GM12878 (cell line): ENCODE measurements at regions of chr1 and their contacts with region 1.

Region 1: GRCh38 chr1:170126696-170127095 is 19.1 kb upstream of the NTMT2 start:
- DNase-seq: peak; percentile 72
- ATAC-seq: peak; percentile 100
- H3K4me3 ChIP-seq: no peak overlapping the region
- H3K27ac ChIP-seq: 0 out of 2 replicates have a peak overlapping the region, but pooled peaks have one; percentile 18
- H3K4me1 ChIP-seq: peaks cover 3% of the 10 kb centered on the region; the same call in 1 of the 2 replicates
- H3K27me3 ChIP-seq: no peaks in the 10 kb centered on the region
- CTCF ChIP-seq: peak; percentile 19 to 32 (median 30); a peak in 3 of 6 replicates
- EP300 ChIP-seq: no peak; a peak in 1 of 4 replicates
- POLR2A ChIP-seq: no peak
- RAD21 ChIP-seq: peak; percentile 40

Region 2: DNA sequence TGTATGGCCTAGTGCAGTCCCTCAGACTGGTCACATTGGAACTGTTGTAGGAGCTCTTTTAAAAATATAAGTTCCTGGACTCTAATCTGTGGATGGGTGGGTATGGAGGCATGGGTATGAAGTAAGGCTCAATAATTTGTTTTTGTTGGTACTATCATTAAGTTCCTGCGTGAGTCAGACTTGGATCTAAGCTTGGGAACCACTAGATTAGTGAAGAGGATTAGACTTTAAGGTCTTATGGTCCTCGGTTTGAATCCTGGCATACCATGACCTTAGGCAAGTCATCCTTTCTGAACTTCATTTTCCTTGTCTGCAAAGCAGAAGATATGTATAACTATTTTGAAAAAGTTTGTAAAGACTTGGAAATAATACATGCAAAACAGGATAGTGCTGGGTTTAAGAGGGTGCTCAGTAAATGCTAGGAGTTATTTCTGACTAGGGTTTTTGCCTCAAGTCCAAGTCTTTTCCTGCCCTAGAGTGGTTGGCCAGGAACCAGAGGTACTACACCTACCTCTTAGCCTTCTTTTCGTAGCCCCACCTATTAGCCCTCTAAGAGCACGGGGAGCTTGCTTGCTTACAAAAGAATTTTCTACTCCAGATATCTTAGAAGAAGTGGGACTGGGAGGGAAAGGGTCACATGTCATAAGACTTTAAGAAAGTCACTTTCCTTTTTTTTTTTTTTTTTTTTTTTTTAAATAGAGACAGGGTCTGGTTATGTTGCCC is 293.4 kb before region 1 on chr1:
- CTCF ChIA-PET with region 1: no interaction called
- POLR2A ChIA-PET with region 1: no interaction called
- RAD21 ChIA-PET with region 1: no interaction called
- SMC1A ChIA-PET with region 1: no interaction called
- in situ Hi-C with region 1: no loop called
- intact Hi-C with region 1: no loop called
- DNase-seq: no peak
- ATAC-seq: no peak
- H3K4me3 ChIP-seq: no peak overlapping the region
- H3K27ac ChIP-seq: no peak overlapping the region
- H3K4me1 ChIP-seq: no peaks in the 10 kb centered on the region
- H3K27me3 ChIP-seq: no peaks in the 10 kb centered on the region
- CTCF ChIP-seq: no peak
- EP300 ChIP-seq: no peak
- POLR2A ChIP-seq: no peak
- RAD21 ChIP-seq: no peak

Region 3: GRCh38 chr1:169941982-169942830 is 184.5 kb before region 1 on chr1:
- CTCF ChIA-PET with region 1: no interaction called
- POLR2A ChIA-PET with region 1: no interaction called
- RAD21 ChIA-PET with region 1: no interaction called
- SMC1A ChIA-PET with region 1: no interaction called
- in situ Hi-C with region 1: no loop called
- intact Hi-C with region 1: no loop called
- DNase-seq: no peak
- ATAC-seq: no peak
- H3K4me3 ChIP-seq: no peak overlapping the region
- H3K27ac ChIP-seq: no peak overlapping the region
- H3K4me1 ChIP-seq: no peaks in the 10 kb centered on the region
- H3K27me3 ChIP-seq: no peaks in the 10 kb centered on the region
- CTCF ChIP-seq: no peak
- EP300 ChIP-seq: no peak
- POLR2A ChIP-seq: no peak
- RAD21 ChIP-seq: no peak

Region 4: DNA sequence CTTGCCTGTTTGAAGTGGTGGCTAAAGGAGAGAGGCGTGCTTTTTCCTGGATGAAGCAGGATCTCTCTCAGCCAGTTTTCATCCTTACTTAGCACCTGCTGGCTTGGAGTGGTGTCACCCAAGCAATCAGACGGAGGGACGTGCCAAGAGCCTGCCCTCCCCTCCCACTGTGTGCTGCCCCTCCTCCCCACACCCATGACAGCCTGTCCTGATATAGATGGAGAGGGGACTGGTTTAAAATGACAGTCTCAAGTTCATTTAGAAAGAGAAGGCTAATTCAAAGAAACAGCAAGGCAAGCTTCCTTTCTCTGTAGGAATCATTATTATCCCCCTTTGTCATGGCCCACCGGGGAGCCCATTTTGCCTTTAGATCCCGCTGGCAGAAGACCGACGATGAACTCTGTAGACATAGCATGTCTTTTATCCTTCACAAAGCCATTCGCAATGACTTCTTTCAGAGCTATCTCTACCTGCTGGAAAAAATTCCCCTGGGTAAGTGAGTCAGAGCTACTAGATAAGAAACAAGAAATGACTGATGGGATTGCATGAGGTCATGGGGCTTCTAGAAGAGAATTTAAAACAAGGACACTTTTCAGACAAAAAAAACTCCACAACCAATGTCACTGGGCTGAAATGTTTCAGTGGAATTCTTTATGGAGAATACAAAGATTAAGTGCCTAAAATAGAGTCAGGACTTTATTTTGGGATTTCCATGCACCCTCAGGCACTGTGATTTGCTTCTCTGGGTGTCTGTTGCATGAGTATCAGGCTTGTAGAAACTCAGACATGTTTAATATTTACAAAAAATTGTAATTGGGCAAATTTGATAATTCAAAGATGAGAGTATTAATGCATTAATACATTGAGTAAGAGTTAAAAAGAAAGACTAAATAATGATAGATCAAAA is 19.3 kb after region 1 on chr1 and contains the start of gene NTMT2:
- CTCF ChIA-PET with region 1: interaction called, 5 read pairs
- POLR2A ChIA-PET with region 1: interaction called, 5 read pairs
- RAD21 ChIA-PET with region 1: interaction called, 10 read pairs
- SMC1A ChIA-PET with region 1: interaction called, 8 read pairs
- in situ Hi-C with region 1: no loop called
- intact Hi-C with region 1: no loop called
- DNase-seq: no peak
- ATAC-seq: peak; percentile 65
- H3K4me3 ChIP-seq: no peak within 1 kb of the TSS
- H3K27ac ChIP-seq: no peak within 1 kb of the TSS
- H3K4me1 ChIP-seq: no peaks in the 10 kb centered on the region
- H3K27me3 ChIP-seq: no peaks in the 10 kb centered on the region
- CTCF ChIP-seq: no peak
- EP300 ChIP-seq: no peak
- POLR2A ChIP-seq: no peak
- RAD21 ChIP-seq: no peak
- polyA plus RNA-seq, gene NTMT2: not detected

Region 5: GRCh38 chr1:170273291-170274130 is 146.8 kb after region 1 on chr1:
- CTCF ChIA-PET with region 1: no interaction called
- POLR2A ChIA-PET with region 1: no interaction called
- RAD21 ChIA-PET with region 1: no interaction called
- SMC1A ChIA-PET with region 1: no interaction called
- in situ Hi-C with region 1: no loop called
- intact Hi-C with region 1: no loop called
- DNase-seq: no peak
- ATAC-seq: no peak
- H3K4me3 ChIP-seq: no peak overlapping the region
- H3K27ac ChIP-seq: no peak overlapping the region
- H3K4me1 ChIP-seq: no peaks in the 10 kb centered on the region
- H3K27me3 ChIP-seq: no peaks in the 10 kb centered on the region
- CTCF ChIP-seq: no peak
- EP300 ChIP-seq: no peak
- POLR2A ChIP-seq: no peak
- RAD21 ChIP-seq: no peak